Vagina (tissue), 2 donors: ENCODE measurements at regions of chr20 and their contacts with region 1.

Region 1: DNA sequence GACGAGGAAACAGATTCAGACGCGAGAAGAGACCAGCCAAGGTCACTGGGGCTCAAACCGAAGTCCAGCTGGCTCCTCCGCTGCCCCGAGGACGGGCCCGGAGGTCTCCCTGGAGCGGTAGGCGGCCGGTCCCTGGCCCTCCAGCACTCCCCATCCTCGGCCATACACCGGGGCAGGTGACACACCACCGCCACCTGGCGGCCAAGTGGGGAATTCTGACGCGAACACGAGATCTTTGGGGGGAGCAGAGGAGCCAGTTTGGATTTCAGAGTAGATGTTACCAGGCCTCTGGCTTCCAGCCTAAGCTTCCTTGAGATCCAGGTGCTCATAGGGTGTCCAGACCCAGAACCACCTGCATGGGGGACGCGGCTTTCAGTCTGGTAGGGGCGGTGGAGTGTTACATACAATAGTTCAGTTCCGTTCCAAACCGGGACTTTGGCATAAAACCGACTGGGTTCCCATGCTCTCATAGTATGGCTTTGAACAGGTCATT is 16.1 kb downstream of the BPIFB1 start:
- DNase-seq: no peak
- H3K4me3 ChIP-seq: no peak overlapping the region
- H3K27ac ChIP-seq: no peak overlapping the region
- H3K4me1 ChIP-seq: no peaks in the 10 kb centered on the region
- H3K27me3 ChIP-seq: no peaks in the 10 kb centered on the region
- CTCF ChIP-seq: peak; percentile 51 to 83 (median 63)
- POLR2A ChIP-seq: no peak

Region 2: DNA sequence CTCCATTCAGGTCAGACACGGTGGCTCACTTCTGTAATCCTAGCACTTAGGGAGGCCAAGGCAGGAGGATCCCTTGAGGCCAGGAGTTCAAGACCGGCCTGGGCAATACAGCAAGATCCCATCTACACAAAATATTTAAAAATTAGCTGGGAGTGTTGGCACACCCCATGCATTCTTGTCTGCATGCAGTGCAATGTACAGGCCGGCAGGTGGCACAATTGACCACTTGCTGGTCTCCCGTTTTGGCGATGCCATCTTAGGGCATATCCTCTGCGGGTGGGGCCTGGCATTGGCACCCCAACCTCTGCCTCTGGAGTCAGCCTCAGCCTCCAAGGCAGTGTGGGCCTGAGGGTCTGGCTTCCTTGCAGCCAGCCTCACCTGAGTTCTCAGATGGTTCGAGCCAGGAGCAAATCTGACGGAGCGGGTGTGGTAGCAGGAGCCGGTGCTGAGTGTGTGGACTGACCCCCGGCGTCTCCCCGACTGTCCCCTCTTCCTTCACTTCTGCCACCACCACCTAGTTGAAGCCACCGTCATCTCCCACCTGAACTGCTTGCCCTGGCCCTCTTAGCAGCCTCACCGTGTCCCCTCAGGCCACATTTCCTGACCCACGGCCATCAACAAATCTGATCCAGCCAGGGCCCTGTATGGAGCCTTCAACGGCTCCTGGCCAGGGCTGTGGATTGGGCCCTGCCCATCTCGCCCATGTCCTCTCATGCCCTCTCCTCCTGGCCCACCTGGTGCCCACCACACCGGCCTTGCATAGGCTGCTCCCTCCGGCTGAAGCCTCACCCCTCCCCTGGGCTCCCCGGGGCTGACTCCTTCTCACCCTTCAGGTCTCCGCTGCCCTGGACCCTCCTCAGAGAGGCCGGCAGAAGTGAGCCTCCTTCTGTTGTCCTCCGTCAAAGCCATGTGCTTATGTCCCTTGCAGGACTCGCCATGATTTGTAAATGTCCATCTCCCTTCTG is 396.4 kb before region 1 on chr20:
- intact Hi-C with region 1: loop called (anchors 10 kb)
- DNase-seq: no peak
- H3K4me3 ChIP-seq: no peak overlapping the region
- H3K27ac ChIP-seq: no peak overlapping the region
- H3K4me1 ChIP-seq: no peaks in the 10 kb centered on the region
- H3K27me3 ChIP-seq: no peaks in the 10 kb centered on the region
- CTCF ChIP-seq: peak; percentile 45 to 77 (median 58)
- POLR2A ChIP-seq: no peak

Region 3: DNA sequence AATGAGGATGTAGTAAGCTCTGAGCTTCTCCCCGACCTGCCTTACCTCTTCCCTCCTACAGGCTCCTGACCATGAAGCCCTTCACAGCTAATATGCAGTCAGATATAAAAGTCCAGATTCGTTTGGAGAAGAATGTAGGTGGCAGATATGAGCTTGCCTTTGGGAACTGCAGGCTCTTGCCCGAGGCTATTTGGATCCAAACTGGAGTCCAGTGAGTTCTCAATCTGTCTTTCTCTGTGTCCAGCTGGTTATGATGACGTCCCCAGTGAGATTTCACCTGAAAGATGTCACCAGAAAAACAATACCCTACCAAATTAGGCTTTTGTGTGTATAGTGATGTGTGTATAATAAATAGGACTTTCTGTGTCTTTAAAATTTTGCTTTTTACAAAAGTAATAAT is 96.7 kb before region 1 on chr20:
- intact Hi-C with region 1: no loop called
- DNase-seq: no peak
- H3K4me3 ChIP-seq: no peak overlapping the region
- H3K27ac ChIP-seq: no peak overlapping the region
- H3K4me1 ChIP-seq: no peaks in the 10 kb centered on the region
- H3K27me3 ChIP-seq: no peaks in the 10 kb centered on the region
- CTCF ChIP-seq: no peak
- POLR2A ChIP-seq: no peak